ENCODE measurements at regions of chr9 and their contacts with region 1.

Region 1: GRCh38 chr9:32069169-32069813 is 315.2 kb upstream of the ACO1 start:
- DNase-seq: no peak
- H3K4me3 ChIP-seq: no peak overlapping the region
- H3K27ac ChIP-seq: no peak overlapping the region
- H3K4me1 ChIP-seq: no peaks in the 10 kb centered on the region
- H3K27me3 ChIP-seq: no peaks in the 10 kb centered on the region
- CTCF ChIP-seq: no peak
- EP300 ChIP-seq: no peak
- POLR2A ChIP-seq: no peak

Region 2: GRCh38 chr9:31730398-31730797 is 338.9 kb before region 1 on chr9:
- intact Hi-C with region 1: no loop called
- DNase-seq: no peak
- H3K4me3 ChIP-seq: no peak overlapping the region
- H3K27ac ChIP-seq: no peak overlapping the region
- H3K4me1 ChIP-seq: no peaks in the 10 kb centered on the region
- H3K27me3 ChIP-seq: no peaks in the 10 kb centered on the region
- CTCF ChIP-seq: no peak
- EP300 ChIP-seq: no peak
- POLR2A ChIP-seq: no peak

Region 3: GRCh38 chr9:32004431-32005076 is 64.7 kb before region 1 on chr9:
- intact Hi-C with region 1: loop called (anchors 10 kb)
- DNase-seq: peak in 1 of 2 donors; percentile 34
- H3K4me3 ChIP-seq: no peak overlapping the region
- H3K27ac ChIP-seq: no peak overlapping the region
- H3K4me1 ChIP-seq: no peaks in the 10 kb centered on the region
- H3K27me3 ChIP-seq: no peaks in the 10 kb centered on the region
- CTCF ChIP-seq: no peak
- EP300 ChIP-seq: no peak
- POLR2A ChIP-seq: no peak

Region 4: GRCh38 chr9:32234451-32234850 is 165.2 kb after region 1 on chr9:
- intact Hi-C with region 1: no loop called
- DNase-seq: no peak
- H3K4me3 ChIP-seq: no peak overlapping the region
- H3K27ac ChIP-seq: no peak overlapping the region
- H3K4me1 ChIP-seq: no peaks in the 10 kb centered on the region
- H3K27me3 ChIP-seq: no peaks in the 10 kb centered on the region
- CTCF ChIP-seq: no peak
- EP300 ChIP-seq: no peak
- POLR2A ChIP-seq: no peak

Region 5: GRCh38 chr9:32398207-32398606 is 328.9 kb after region 1 on chr9:
- intact Hi-C with region 1: no loop called
- DNase-seq: no peak
- H3K4me3 ChIP-seq: no peak overlapping the region
- H3K27ac ChIP-seq: no peak overlapping the region
- H3K4me1 ChIP-seq: peaks cover 0 to 41% (median 14%) of the 10 kb centered on the region in 4 donors
- H3K27me3 ChIP-seq: no peaks in the 10 kb centered on the region
- CTCF ChIP-seq: no peak
- EP300 ChIP-seq: no peak
- POLR2A ChIP-seq: no peak

Region 6: GRCh38 chr9:32677931-32678330 is 608.6 kb after region 1 on chr9:
- intact Hi-C with region 1: no loop called
- DNase-seq: no peak
- H3K4me3 ChIP-seq: no peak overlapping the region
- H3K27ac ChIP-seq: no peak overlapping the region
- H3K4me1 ChIP-seq: no peaks in the 10 kb centered on the region
- H3K27me3 ChIP-seq: no peaks in the 10 kb centered on the region
- CTCF ChIP-seq: no peak
- EP300 ChIP-seq: no peak
- POLR2A ChIP-seq: no peak

Measured in stomach (tissue), 19 donors.